HCT116 (cell line): ENCODE measurements at regions of chr6 and their contacts with region 1.

Region 1: GRCh38 chr6:132279592-132280139 is 121.6 kb downstream of the MOXD1 start:
- DNase-seq: peak; percentile 61
- ATAC-seq: peak; percentile 94
- H3K4me3 ChIP-seq: peak overlapping the region; percentile 27 to 52
- H3K27ac ChIP-seq: no peak overlapping the region
- H3K4me1 ChIP-seq: no peaks in the 10 kb centered on the region
- H3K27me3 ChIP-seq: no peaks in the 10 kb centered on the region
- CTCF ChIP-seq: peak; percentile 69 to 98 (median 98)
- POLR2A ChIP-seq: no peak
- RAD21 ChIP-seq: peak; percentile 79

Region 2: GRCh38 chr6:131914967-131915751 is 364.5 kb before region 1 on chr6:
- CTCF ChIA-PET with region 1: interaction called, 23 read pairs
- POLR2A ChIA-PET with region 1: no interaction called
- RAD21 ChIA-PET with region 1: no interaction called
- intact Hi-C with region 1: no loop called
- DNase-seq: peak; percentile 68
- ATAC-seq: peak; percentile 92
- H3K4me3 ChIP-seq: no peak overlapping the region
- H3K27ac ChIP-seq: no peak overlapping the region
- H3K4me1 ChIP-seq: 0 out of 4 replicates have a peak, but pooled peaks cover 0 to 7% of the 10 kb centered on the region in 2 experiments
- H3K27me3 ChIP-seq: no peaks in the 10 kb centered on the region
- CTCF ChIP-seq: peak; percentile 75 to 94 (median 87)
- POLR2A ChIP-seq: no peak
- RAD21 ChIP-seq: peak; percentile 78

Region 3: DNA sequence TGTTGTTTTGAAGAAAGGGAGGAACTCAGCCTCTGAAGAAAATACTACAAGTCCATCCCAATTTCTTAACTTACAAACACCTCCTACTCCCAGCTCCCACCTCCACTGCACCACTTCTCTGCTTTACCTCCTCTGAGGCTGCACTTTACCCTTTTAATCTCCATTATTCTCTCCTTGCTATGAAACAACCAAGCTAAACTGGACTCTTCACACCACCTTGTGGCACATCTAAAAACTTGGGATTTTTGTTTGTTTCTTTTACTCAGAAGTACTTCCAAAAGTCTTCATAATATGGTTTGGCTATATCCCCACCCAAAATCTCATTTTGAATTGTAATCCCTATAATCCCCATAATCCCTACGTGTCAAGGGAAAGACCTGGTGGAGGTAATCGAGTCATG is 20.6 kb before region 1 on chr6:
- CTCF ChIA-PET with region 1: interaction called, 17 read pairs
- POLR2A ChIA-PET with region 1: no interaction called
- RAD21 ChIA-PET with region 1: no interaction called
- intact Hi-C with region 1: no loop called
- DNase-seq: no peak
- ATAC-seq: peak; percentile 60
- H3K4me3 ChIP-seq: no peak overlapping the region
- H3K27ac ChIP-seq: no peak overlapping the region
- H3K4me1 ChIP-seq: no peaks in the 10 kb centered on the region
- H3K27me3 ChIP-seq: no peaks in the 10 kb centered on the region
- CTCF ChIP-seq: peak in 2 of 3 experiments; percentile 42 to 54; a peak in 3 of 6 replicates
- POLR2A ChIP-seq: no peak
- RAD21 ChIP-seq: peak; percentile 55

Region 4: DNA sequence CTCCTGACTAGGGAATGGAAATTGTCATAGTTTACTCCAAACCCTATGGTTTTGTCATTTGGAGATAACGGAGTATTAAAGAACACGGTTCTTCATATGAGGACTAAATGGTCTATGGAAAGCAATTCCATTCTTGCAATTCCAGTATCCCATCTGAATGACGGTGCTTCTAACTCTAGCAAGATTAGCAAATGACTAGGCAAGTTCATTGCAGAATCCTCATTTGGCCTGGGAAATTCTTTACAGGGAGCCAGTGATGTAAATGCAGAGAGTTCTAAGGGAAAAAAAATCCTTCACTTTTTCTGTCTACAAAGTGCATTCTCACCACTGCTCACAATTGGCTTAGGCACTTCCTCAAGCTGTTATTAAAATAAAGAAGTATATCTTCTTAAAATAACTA is 10.1 kb after region 1 on chr6:
- CTCF ChIA-PET with region 1: interaction called, 44 read pairs
- POLR2A ChIA-PET with region 1: interaction called, 3 read pairs
- RAD21 ChIA-PET with region 1: interaction called in 1 of 2 experiments, 3 read pairs
- intact Hi-C with region 1: no loop called
- DNase-seq: no peak
- ATAC-seq: no peak
- H3K4me3 ChIP-seq: no peak overlapping the region
- H3K27ac ChIP-seq: no peak overlapping the region
- H3K4me1 ChIP-seq: no peaks in the 10 kb centered on the region
- H3K27me3 ChIP-seq: no peaks in the 10 kb centered on the region
- CTCF ChIP-seq: no peak
- POLR2A ChIP-seq: no peak
- RAD21 ChIP-seq: no peak

Region 5: DNA sequence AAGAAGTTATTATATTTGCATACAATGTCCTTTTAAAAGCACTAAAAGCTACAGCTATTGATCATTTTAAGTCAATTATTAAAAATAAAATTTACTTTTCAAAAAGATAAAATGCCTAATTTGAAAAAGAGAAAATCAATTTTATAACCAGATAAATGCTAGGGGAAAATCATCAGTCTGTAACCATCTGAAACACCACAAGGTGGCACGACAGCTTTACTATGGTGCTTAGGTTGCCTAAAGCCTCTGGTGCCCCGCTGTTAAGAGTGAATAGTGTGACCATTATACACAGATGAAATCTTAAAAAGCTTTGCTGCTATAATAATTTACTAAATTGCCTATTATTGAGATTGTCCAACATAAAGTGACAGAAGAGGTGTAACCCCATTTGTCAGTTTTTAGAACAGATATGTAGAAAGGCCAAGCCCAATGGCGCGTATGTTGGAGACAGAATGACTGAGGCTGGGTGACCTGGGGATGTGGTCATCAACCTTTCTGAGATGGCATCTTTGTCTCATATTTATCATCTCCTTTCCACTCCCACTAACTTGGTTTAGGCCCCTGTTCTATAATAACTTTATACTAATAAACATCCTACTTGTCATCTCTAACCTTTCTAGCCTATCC is 20.8 kb after region 1 on chr6:
- CTCF ChIA-PET with region 1: interaction called, 36 read pairs
- POLR2A ChIA-PET with region 1: no interaction called
- RAD21 ChIA-PET with region 1: interaction called in 1 of 2 experiments, 10 read pairs
- intact Hi-C with region 1: loop called (anchors 1 kb)
- DNase-seq: peak; percentile 40
- ATAC-seq: peak; percentile 91
- H3K4me3 ChIP-seq: no peak overlapping the region
- H3K27ac ChIP-seq: no peak overlapping the region
- H3K4me1 ChIP-seq: no peaks in the 10 kb centered on the region
- H3K27me3 ChIP-seq: no peaks in the 10 kb centered on the region
- CTCF ChIP-seq: peak; percentile 47 to 80 (median 70); a peak in 5 of 6 replicates
- POLR2A ChIP-seq: no peak
- RAD21 ChIP-seq: peak; percentile 87

Region 6: DNA sequence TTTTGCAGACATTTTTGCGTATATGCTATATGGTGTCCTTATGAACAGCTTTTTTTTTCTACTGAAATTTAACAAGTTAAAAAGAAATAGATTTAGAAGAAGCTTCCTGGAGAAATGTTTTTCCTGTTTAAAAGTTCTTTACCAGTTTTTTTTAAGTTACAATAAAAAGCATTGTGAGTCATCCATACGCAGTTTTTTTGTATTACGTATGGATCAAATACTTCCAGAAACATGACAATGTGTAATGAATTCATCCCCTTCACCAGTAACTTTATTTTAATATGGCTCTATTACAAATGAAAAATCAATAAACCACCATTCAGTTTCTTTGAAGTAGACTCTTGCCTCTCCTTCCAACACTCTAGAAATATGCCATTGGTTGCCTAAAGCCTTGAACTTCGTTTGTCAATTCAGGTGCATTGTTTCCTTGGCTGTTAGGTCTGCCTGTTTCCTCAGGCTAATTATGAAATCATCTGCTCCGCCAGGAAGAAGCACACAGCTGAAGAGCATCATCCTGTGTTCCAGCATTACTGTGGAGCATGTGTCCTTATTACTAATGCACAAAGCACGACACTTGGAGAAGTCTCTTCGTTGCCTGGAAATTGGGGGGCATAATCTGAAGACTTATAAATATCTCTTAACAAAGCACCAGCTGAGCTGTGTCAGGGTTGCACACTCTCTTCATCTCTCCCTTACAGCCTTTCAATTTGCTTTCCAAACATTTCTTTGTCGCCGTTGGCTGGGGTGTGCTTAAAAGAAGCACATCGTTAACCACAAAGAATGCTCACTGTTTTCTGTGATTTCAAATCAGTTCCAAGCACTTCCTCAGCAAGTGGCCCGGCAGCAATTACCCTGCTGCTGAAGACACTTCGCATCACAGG is 112.0 kb after region 1 on chr6:
- CTCF ChIA-PET with region 1: interaction called, 15 read pairs
- POLR2A ChIA-PET with region 1: no interaction called
- RAD21 ChIA-PET with region 1: no interaction called
- intact Hi-C with region 1: no loop called
- DNase-seq: no peak
- ATAC-seq: no peak
- H3K4me3 ChIP-seq: no peak overlapping the region
- H3K27ac ChIP-seq: no peak overlapping the region
- H3K4me1 ChIP-seq: no peaks in the 10 kb centered on the region
- H3K27me3 ChIP-seq: no peaks in the 10 kb centered on the region
- CTCF ChIP-seq: no peak
- POLR2A ChIP-seq: no peak
- RAD21 ChIP-seq: no peak

Region 7: DNA sequence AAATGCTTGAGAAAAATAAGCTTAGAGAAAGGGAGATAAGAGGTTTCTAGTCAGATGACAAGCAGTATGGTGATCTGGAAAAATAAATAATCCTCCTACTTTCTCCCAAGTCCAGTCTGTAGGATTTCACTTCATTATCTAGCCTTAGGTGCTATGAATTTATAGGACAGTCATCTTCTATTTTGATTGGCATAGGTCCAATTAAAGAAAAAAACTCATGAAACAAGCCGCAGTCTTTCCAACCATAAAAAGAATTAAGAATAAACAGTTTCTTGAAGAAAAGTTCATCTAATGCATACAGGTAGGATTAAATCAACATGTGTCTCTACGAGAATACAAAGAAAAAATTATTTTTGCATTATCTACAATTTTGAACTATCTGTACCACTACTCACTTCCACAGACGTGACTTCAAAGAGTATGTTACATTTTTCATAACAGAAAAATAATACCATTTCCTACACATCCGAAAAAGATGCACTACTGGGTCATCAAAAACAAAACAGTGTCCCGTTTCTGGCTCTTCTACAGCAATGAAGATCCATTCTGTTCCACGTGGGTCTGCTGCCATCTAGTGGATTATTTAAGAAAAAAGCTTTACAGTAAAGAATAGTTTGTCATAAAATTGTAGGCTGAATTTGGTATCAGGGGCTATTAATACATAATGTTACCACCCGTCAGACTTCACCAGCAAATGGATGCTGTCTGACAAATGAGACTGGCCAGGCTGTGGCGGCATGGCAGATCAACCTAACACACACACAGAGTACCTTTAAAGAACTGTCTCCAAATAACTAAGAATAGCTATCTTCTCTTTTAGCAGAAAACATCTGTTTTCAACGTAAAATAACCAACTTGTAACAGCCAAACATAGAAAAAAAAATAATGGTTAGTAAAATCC is 204.4 kb after region 1 on chr6:
- CTCF ChIA-PET with region 1: interaction called, 83 read pairs
- POLR2A ChIA-PET with region 1: no interaction called
- RAD21 ChIA-PET with region 1: interaction called, 4 to 8 read pairs
- intact Hi-C with region 1: loop called (anchors 1 kb)
- DNase-seq: peak; percentile 47
- ATAC-seq: peak; percentile 76
- H3K4me3 ChIP-seq: no peak overlapping the region
- H3K27ac ChIP-seq: no peak overlapping the region
- H3K4me1 ChIP-seq: no peaks in the 10 kb centered on the region
- H3K27me3 ChIP-seq: no peaks in the 10 kb centered on the region
- CTCF ChIP-seq: peak; percentile 47 to 86 (median 80)
- POLR2A ChIP-seq: no peak
- RAD21 ChIP-seq: peak; percentile 82